ENCODE measurements at regions of chr7 and their contacts with region 1.

Region 1: GRCh38 chr7:27751888-27752660 is 12.1 kb downstream of the TAX1BP1 start:
- DNase-seq: no peak
- ATAC-seq: no peak
- H3K4me3 ChIP-seq: no peak overlapping the region
- H3K4me3 Mint-ChIP-seq: no peak overlapping the region
- H3K27ac ChIP-seq: no peak overlapping the region
- H3K27ac Mint-ChIP-seq: peak overlapping the region in 2 of 9 donors; percentile 18 to 55
- H3K4me1 ChIP-seq: peaks cover 0 to 4% of the 10 kb centered on the region in 2 donors
- H3K4me1 Mint-ChIP-seq: peaks cover 13 to 86% (median 68%) of the 10 kb centered on the region in 7 donors
- H3K27me3 ChIP-seq: no peaks in the 10 kb centered on the region
- H3K27me3 Mint-ChIP-seq: no peaks in the 10 kb centered on the region

Region 2: DNA sequence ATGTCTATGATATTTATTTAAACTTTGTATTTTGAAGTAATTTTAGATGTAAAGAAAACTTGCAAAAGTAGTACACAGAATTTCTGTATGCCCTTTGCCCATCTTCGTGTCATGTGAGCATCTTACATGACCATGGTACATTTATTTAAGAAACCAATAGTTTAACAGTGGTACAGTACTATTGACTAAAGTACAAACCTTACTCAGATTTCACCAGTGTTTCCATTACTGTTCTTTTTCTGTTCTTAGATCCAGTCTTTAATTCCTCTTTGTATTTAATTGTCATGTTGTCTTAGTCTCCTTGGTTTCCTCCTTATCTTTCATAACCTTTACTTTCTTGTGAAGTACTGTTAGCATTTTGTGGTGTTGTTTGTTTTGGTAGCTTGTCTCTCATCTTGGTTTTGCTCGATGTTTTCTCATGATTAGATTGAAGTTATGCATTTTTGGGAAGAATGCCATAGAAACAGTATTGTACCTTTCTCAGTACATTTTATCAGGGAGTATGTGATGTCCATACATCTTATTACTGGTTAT is 12.0 kb after region 1 on chr7:
- CTCF ChIA-PET with region 1: no interaction called
- POLR2A ChIA-PET with region 1: interaction called, 3 read pairs
- intact Hi-C with region 1: loop called in 1 of 2 experiments (anchors 1 kb)
- DNase-seq: no peak
- ATAC-seq: no peak
- H3K4me3 ChIP-seq: no peak overlapping the region
- H3K4me3 Mint-ChIP-seq: peak overlapping the region in 1 of 10 donors; percentile 7
- H3K27ac ChIP-seq: no peak overlapping the region
- H3K27ac Mint-ChIP-seq: peak overlapping the region in 2 of 9 donors; percentile 6 to 40
- H3K4me1 ChIP-seq: no peaks in the 10 kb centered on the region
- H3K4me1 Mint-ChIP-seq: peaks cover 4 to 56% (median 45%) of the 10 kb centered on the region in 7 donors
- H3K27me3 ChIP-seq: no peaks in the 10 kb centered on the region
- H3K27me3 Mint-ChIP-seq: no peaks in the 10 kb centered on the region

Region 3: DNA sequence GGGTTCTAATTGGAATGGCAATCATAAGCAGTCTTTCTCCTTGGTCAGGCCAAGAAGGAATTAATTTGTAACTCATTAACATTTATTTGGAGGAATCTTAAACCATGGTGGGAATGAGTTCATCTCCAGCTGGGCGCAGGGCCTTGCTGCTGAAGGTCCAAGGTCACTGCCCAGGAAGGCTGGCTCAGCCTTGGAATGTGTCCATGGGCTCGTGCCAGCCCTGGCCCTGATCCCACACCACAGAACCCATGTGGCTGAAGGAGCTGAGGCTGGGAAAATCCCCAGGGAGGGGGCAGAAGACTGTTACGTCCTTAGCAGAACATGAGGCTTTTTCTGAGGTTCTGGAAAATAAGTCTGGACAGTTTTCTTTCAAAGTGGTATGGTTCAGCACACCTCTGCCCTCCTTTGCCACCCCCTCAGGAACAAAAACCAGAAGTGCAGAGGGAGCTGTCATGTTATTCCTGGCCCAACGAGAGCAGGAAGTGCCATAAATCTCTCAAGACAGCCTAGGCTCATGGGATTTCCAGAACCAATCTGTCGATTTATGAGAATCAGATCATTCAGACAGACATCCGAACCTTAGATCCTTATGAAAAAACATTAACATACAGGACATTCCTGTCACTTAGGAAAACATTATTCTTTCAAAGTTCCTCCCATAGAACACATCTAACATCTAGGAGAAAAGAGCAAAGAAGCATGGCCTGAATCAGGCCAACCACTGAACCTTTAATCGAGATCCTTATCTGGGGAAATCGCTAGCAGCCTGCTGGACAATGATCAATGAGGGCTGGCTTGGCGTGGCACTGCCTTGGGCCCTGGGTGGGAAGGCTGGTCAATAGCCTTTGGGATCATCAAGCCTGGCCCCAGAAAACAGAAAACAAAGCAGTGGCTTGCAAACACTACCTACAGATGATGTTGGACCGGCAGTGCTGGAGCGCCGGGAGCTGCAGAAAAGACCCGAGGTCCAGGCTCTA is 122.2 kb after region 1 on chr7:
- CTCF ChIA-PET with region 1: no interaction called
- POLR2A ChIA-PET with region 1: no interaction called
- intact Hi-C with region 1: no loop called
- DNase-seq: no peak
- ATAC-seq: no peak
- H3K4me3 ChIP-seq: no peak overlapping the region
- H3K4me3 Mint-ChIP-seq: no peak overlapping the region
- H3K27ac ChIP-seq: no peak overlapping the region
- H3K27ac Mint-ChIP-seq: no peak overlapping the region
- H3K4me1 ChIP-seq: no peaks in the 10 kb centered on the region
- H3K4me1 Mint-ChIP-seq: peaks cover 0 to 5% (median 0%) of the 10 kb centered on the region in 7 donors
- H3K27me3 ChIP-seq: no peaks in the 10 kb centered on the region
- H3K27me3 Mint-ChIP-seq: no peaks in the 10 kb centered on the region